Activated T-helper 2 cell treated with anti-CD3 and anti-CD28 coated beads, Interferon-gamma antibody, Interleukin-2, Interleukin-4, amounts not matched to agents 10 μg/mL and 5 μg/mL and 100 μg/mL, durations not matched to agents 14 hours and 24 hours and 36 hours (primary cell): ENCODE measurements at regions of chr11 and their contacts with region 1.

Region 1: DNA sequence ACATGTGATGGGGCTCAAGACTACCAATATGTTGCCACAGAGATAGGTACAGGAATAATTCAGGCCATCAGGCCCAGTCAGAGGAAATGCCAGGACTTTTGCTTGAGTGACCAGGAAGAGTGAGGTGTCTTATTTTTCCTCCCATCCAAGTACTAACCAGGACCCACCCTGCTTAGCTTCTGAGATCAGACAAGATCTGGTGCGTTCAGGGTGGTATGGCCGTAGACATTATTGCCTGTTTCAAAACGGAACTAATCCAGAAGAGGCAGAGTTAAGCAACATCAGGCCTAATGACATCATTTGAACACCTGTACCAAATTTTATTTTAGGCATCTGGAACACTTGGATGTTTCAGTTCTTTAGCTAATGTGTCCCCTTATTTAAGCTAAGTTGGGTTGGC is 205.5 kb upstream of the POU2AF2 start:
- DNase-seq: no peak
- H3K4me3 Mint-ChIP-seq: no peak overlapping the region
- H3K27ac Mint-ChIP-seq: no peak overlapping the region
- H3K4me1 Mint-ChIP-seq: no peaks in the 10 kb centered on the region
- H3K27me3 Mint-ChIP-seq: peaks cover 3% of the 10 kb centered on the region

Region 2: DNA sequence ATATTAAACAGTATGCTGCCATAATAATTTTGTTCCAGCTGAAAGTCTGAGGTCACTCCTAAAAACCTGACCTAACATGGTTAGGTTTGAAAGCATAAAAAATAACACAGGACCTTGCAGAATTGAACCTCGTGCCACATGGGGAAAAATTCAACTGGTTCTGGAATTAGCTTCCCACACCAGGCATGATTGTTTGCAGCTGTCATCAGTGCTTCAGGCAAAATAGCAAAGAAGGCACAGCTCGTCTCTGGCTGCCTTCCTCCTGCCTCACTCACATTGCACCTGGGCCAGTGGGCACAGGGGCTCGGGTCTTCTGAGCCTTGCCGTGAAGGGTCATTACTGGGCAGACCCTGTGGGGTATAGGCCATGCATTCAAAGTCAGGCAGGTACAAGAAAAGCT is 173.9 kb before region 1 on chr11:
- intact Hi-C with region 1: no loop called
- DNase-seq: no peak
- H3K4me3 Mint-ChIP-seq: no peak overlapping the region
- H3K27ac Mint-ChIP-seq: no peak overlapping the region
- H3K4me1 Mint-ChIP-seq: no peaks in the 10 kb centered on the region
- H3K27me3 Mint-ChIP-seq: peaks cover 2% of the 10 kb centered on the region

Region 3: DNA sequence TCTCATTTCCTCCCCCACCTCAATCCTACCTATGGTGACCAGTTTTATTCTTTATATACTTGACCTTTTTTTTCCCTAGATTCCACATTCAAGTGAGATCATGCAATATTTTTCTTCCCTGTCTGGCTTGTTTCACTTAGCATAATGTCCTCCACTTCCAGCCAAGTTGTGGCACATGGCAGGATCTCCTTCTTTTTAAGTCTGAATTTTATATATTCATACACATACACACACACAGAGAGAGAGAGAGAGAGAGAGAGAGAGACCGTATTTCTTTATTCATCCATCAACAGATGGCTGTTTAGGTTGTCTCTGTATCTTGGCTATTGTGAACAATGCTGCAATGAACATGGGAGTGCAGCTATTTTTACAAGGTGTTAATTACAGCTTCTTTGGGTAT is 207.0 kb after region 1 on chr11:
- intact Hi-C with region 1: loop called (anchors 10 kb)
- DNase-seq: no peak
- H3K4me3 Mint-ChIP-seq: no peak overlapping the region
- H3K27ac Mint-ChIP-seq: no peak overlapping the region
- H3K4me1 Mint-ChIP-seq: no peaks in the 10 kb centered on the region
- H3K27me3 Mint-ChIP-seq: peaks cover 27% of the 10 kb centered on the region